ENCODE measurements at regions of chr9 and their contacts with region 1.

Region 1: GRCh38 chr9:6907772-6908381 is 150.1 kb downstream of the KDM4C start:
- DNase-seq: peak; percentile 45
- H3K4me3 ChIP-seq: no peak overlapping the region
- H3K27ac ChIP-seq: no peak overlapping the region
- H3K4me1 ChIP-seq: no peaks in the 10 kb centered on the region
- H3K27me3 ChIP-seq: no peaks in the 10 kb centered on the region
- CTCF ChIP-seq: peak; percentile 79

Region 2: GRCh38 chr9:7172154-7173125 is 264.6 kb after region 1 on chr9:
- CTCF ChIA-PET with region 1: no interaction called
- POLR2A ChIA-PET with region 1: no interaction called
- intact Hi-C with region 1: loop called (anchors 10 kb)
- DNase-seq: no peak
- H3K4me3 ChIP-seq: no peak overlapping the region
- H3K27ac ChIP-seq: no peak overlapping the region
- H3K4me1 ChIP-seq: no peaks in the 10 kb centered on the region
- H3K27me3 ChIP-seq: no peaks in the 10 kb centered on the region
- CTCF ChIP-seq: no peak